MCF 10A (cell line): ENCODE measurements at regions of chr2 and their contacts with region 1.

Region 1: DNA sequence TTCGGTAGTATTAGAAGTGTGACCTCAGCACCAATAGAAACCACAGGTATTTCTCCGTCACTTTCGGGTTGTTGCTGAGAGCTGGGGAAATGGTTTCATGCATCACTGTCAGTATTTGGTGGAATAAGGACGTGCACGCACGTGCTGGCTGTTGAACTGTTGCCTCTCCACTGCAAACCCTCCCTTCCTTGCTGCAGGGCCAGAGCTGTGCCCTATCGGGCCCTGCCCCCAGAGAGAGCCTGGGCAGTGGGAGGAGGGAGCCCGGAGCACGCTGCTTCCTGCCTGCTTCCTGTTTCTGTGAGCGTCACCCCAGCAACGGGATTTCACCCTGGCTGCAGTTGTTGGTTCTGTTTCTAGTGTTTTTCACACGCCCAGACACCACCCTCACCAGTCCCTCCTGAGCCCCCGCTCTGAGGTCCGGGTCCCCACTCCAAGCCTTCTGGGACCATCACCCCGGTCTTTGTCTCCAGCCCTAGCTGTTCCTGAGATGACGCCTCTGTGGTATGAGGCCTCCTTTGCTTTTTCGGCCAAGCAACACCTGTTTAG is 47.4 kb downstream of the LRRFIP1 start:
- DNase-seq: peak; percentile 59
- H3K4me3 Mint-ChIP-seq: peak overlapping the region; percentile 58
- H3K27ac Mint-ChIP-seq: peak overlapping the region; percentile 96
- H3K4me1 Mint-ChIP-seq: peaks cover 14% of the 10 kb centered on the region
- H3K27me3 Mint-ChIP-seq: no peaks in the 10 kb centered on the region
- CTCF ChIP-seq: no peak

Region 2: GRCh38 chr2:237685408-237685807 is 10.6 kb after region 1 on chr2:
- CTCF ChIA-PET with region 1: interaction called, 45 read pairs
- POLR2A ChIA-PET with region 1: interaction called, 150 read pairs
- intact Hi-C with region 1: loop called (anchors 1 kb)
- DNase-seq: peak; percentile 44
- H3K4me3 Mint-ChIP-seq: no peak overlapping the region
- H3K27ac Mint-ChIP-seq: no peak overlapping the region
- H3K4me1 Mint-ChIP-seq: peaks cover 26% of the 10 kb centered on the region
- H3K27me3 Mint-ChIP-seq: no peaks in the 10 kb centered on the region
- CTCF ChIP-seq: peak; percentile 15

Region 3: GRCh38 chr2:237702441-237703391 is 27.9 kb after region 1 on chr2:
- CTCF ChIA-PET with region 1: interaction called, 21 read pairs
- POLR2A ChIA-PET with region 1: interaction called, 3 read pairs
- intact Hi-C with region 1: no loop called
- DNase-seq: peak; percentile 36
- H3K4me3 Mint-ChIP-seq: peak overlapping the region; percentile 15
- H3K27ac Mint-ChIP-seq: peak overlapping the region; percentile 91
- H3K4me1 Mint-ChIP-seq: peaks cover 29% of the 10 kb centered on the region
- H3K27me3 Mint-ChIP-seq: no peaks in the 10 kb centered on the region
- CTCF ChIP-seq: no peak

Region 4: GRCh38 chr2:237744613-237745249 is 69.9 kb after region 1 on chr2:
- CTCF ChIA-PET with region 1: interaction called, 206 read pairs
- POLR2A ChIA-PET with region 1: interaction called, 53 read pairs
- intact Hi-C with region 1: loop called (anchors 1 kb)
- DNase-seq: peak; percentile 55
- H3K4me3 Mint-ChIP-seq: no peak overlapping the region
- H3K27ac Mint-ChIP-seq: peak overlapping the region; percentile 33
- H3K4me1 Mint-ChIP-seq: peaks cover 19% of the 10 kb centered on the region
- H3K27me3 Mint-ChIP-seq: no peaks in the 10 kb centered on the region
- CTCF ChIP-seq: peak; percentile 92

Region 5: DNA sequence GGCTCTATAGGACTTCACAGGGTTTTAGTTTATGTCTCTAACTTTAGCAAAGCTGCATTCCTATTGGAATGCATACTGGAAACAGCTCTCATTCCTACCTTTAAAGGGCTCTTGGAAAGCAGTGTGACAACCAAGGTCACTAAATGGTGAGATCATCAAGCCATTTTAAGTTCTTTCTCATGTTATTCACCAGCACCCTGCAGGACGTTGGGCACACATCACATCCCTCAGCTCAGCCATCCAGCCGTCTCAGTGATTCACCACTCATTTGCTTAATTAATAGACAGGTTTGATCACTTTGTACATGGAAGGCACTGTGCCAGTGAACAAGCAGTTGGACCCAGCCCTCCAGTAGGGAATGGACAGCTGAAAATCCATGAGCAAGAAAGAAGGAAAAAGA is 91.5 kb after region 1 on chr2:
- CTCF ChIA-PET with region 1: interaction called, 10 read pairs
- POLR2A ChIA-PET with region 1: no interaction called
- intact Hi-C with region 1: no loop called
- DNase-seq: no peak
- H3K4me3 Mint-ChIP-seq: no peak overlapping the region
- H3K27ac Mint-ChIP-seq: no peak overlapping the region
- H3K4me1 Mint-ChIP-seq: no peaks in the 10 kb centered on the region
- H3K27me3 Mint-ChIP-seq: no peaks in the 10 kb centered on the region
- CTCF ChIP-seq: no peak